AG04450 (cell line): ENCODE measurements at regions of chr15 and their contacts with region 1.

Region 1: DNA sequence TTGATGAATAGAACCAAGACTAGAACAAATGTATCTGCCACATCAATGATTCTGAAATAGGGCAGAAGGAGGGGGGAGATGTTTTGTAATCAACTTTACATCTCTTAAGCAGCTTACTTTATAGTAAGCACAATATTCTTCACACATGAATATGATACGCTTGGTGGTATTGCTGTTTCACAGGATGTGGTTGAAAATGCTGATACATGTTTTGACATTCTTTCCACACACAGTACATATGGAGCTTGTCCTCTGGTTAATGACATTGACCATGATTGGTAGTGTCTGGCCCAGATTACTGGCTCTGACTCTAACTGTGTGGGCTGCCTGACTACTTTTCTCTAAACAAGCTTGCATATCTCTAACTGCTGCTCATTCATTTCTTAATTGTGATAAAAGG is 168.9 kb downstream of the KLHL25 start:
- DNase-seq: peak; percentile 81
- H3K4me3 ChIP-seq: no peak overlapping the region
- H3K27ac ChIP-seq: peak overlapping the region; percentile 73
- H3K27me3 ChIP-seq: no peaks in the 10 kb centered on the region
- CTCF ChIP-seq: no peak

Region 2: GRCh38 chr15:85597155-85597815 is 28.6 kb before region 1 on chr15:
- CTCF ChIA-PET with region 1: no interaction called
- POLR2A ChIA-PET with region 1: no interaction called
- DNase-seq: no peak
- H3K4me3 ChIP-seq: no peak overlapping the region
- H3K27ac ChIP-seq: no peak overlapping the region
- H3K27me3 ChIP-seq: no peaks in the 10 kb centered on the region
- CTCF ChIP-seq: no peak

Region 3: GRCh38 chr15:85639752-85640381 is 14.0 kb after region 1 on chr15:
- CTCF ChIA-PET with region 1: interaction called, 3 read pairs
- POLR2A ChIA-PET with region 1: interaction called, 10 read pairs
- DNase-seq: no peak
- H3K4me3 ChIP-seq: no peak overlapping the region
- H3K27ac ChIP-seq: no peak overlapping the region
- H3K27me3 ChIP-seq: no peaks in the 10 kb centered on the region
- CTCF ChIP-seq: no peak

Region 4: DNA sequence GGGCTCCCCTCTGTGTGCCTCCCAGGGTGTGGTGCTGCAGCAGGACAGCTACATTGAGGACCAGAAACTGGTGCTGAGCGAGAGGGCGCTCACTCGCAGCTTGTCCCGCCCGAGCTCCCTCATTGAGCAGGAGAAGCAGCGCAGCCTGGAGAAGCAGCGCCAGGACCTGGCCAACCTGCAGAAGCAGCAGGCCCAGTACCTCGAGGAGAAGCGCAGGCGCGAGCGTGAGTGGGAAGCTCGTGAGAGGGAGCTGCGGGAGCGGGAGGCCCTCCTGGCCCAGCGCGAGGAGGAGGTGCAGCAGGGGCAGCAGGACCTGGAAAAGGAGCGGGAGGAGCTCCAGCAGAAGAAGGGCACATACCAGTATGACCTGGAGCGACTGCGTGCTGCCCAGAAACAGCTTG is 115.2 kb after region 1 on chr15:
- CTCF ChIA-PET with region 1: no interaction called
- POLR2A ChIA-PET with region 1: no interaction called
- DNase-seq: no peak
- H3K4me3 ChIP-seq: no peak overlapping the region
- H3K27ac ChIP-seq: peak overlapping the region; percentile 2
- H3K27me3 ChIP-seq: no peaks in the 10 kb centered on the region
- CTCF ChIP-seq: no peak

Region 5: DNA sequence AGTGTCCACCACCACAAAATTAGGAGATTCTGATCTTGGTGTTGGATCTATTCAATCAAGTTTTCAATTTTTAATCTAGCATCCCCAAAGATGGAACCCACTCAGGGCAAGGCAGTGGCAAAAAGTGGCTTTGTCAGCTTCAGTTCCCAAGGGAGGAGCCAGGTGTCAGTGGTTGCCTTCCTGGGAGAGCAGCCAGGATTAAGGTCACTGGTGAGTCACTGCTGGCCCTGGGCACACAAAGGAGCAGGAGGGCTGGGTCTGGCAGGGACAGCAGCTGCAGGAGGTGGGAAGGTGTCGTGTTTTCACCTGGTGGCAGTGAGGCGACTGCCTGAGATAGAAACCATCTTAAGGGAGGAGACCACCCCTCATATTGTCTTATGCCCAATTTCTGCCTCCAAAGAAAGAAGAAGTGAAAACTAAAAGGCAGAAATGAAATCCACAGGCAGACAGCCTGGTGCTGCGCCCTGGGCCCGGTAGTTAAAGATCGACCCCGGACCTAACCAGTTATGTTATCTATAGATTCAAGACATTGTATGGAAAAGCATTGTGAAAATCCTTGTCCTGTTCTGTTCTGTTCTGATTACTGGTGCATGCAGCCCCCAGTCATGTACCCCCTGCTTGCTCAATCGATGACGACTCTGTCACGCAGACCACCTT is 174.7 kb after region 1 on chr15:
- CTCF ChIA-PET with region 1: no interaction called
- POLR2A ChIA-PET with region 1: no interaction called
- DNase-seq: no peak
- H3K4me3 ChIP-seq: no peak overlapping the region
- H3K27ac ChIP-seq: no peak overlapping the region
- H3K27me3 ChIP-seq: no peaks in the 10 kb centered on the region
- CTCF ChIP-seq: no peak